ENCODE measurements at regions of chr2 and their contacts with region 1.

Region 1: GRCh38 chr2:67108231-67108630 is 288.9 kb upstream of the ETAA1 start:
- DNase-seq: no peak
- ATAC-seq: no peak
- H3K4me3 ChIP-seq: no peak overlapping the region
- H3K27ac ChIP-seq: no peak overlapping the region
- H3K4me1 ChIP-seq: no peaks in the 10 kb centered on the region
- H3K27me3 ChIP-seq: no peaks in the 10 kb centered on the region
- CTCF ChIP-seq: no peak

Region 2: GRCh38 chr2:67057901-67058703 is 50.1 kb before region 1 on chr2:
- intact Hi-C with region 1: no loop called
- DNase-seq: no peak
- ATAC-seq: no peak
- H3K4me3 ChIP-seq: no peak overlapping the region
- H3K27ac ChIP-seq: no peak overlapping the region
- H3K4me1 ChIP-seq: no peaks in the 10 kb centered on the region
- H3K27me3 ChIP-seq: no peaks in the 10 kb centered on the region
- CTCF ChIP-seq: no peak

Region 3: DNA sequence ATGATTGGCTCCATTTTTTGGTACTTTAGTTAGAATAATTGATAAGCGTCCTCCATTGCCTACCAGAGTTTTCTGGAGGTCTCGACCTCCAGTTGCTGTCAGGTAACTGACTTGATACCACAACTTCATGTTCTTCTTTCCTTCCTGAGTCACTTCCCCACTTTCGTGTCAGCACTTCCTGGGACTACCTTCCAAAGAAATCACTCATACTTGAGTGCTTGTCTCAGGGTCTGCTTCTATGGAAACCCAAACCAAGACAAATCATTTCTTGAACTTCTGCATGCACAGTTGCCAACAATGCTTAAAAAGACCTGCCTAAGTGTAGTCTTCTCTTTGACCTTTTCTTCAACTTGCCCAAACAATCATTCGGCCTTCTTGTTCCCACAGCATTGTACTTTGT is 78.6 kb after region 1 on chr2:
- intact Hi-C with region 1: loop called in 1 of 10 experiments (anchors 10 kb)
- DNase-seq: no peak
- ATAC-seq: no peak
- H3K4me3 ChIP-seq: no peak overlapping the region
- H3K27ac ChIP-seq: no peak overlapping the region
- H3K4me1 ChIP-seq: no peaks in the 10 kb centered on the region
- H3K27me3 ChIP-seq: no peaks in the 10 kb centered on the region
- CTCF ChIP-seq: no peak